Activated CD4-positive, alpha-beta memory T cell treated with anti-CD3 and anti-CD28 coated beads for 36 hours (primary cell): ENCODE measurements at regions of chr4 and their contacts with region 1.

Region 1: DNA sequence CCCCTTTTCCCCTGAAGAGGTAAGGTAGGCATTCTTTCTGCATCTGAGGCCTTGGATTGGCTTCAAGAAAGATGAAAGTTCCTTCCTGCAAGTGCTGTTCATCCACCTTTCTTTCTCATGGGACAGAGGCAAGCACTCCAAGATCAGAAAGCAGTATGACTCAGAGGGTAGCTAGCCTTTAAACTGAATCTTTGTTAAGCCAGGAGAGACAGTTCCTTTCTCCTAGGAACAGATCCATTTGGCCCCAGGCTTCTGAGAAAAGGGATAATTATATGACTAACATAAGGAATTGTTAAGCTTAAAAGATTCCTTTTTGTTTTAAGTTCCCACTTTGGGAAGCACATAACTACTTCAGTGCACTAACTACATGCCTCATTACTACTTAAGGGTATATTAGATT is 192.0 kb downstream of the PPP3CA start:
- DNase-seq: no peak
- H3K4me3 Mint-ChIP-seq: no peak overlapping the region
- H3K27ac Mint-ChIP-seq: no peak overlapping the region
- H3K4me1 Mint-ChIP-seq: peaks cover 45% of the 10 kb centered on the region
- H3K27me3 Mint-ChIP-seq: no peaks in the 10 kb centered on the region

Region 2: GRCh38 chr4:101037938-101038413 is 117.4 kb before region 1 on chr4:
- CTCF ChIA-PET with region 1: no interaction called
- POLR2A ChIA-PET with region 1: no interaction called
- intact Hi-C with region 1: loop called (anchors 1 kb)
- DNase-seq: peak; percentile 44
- H3K4me3 Mint-ChIP-seq: no peak overlapping the region
- H3K27ac Mint-ChIP-seq: peak overlapping the region; percentile 52
- H3K4me1 Mint-ChIP-seq: peaks cover 27% of the 10 kb centered on the region
- H3K27me3 Mint-ChIP-seq: no peaks in the 10 kb centered on the region

Region 3: DNA sequence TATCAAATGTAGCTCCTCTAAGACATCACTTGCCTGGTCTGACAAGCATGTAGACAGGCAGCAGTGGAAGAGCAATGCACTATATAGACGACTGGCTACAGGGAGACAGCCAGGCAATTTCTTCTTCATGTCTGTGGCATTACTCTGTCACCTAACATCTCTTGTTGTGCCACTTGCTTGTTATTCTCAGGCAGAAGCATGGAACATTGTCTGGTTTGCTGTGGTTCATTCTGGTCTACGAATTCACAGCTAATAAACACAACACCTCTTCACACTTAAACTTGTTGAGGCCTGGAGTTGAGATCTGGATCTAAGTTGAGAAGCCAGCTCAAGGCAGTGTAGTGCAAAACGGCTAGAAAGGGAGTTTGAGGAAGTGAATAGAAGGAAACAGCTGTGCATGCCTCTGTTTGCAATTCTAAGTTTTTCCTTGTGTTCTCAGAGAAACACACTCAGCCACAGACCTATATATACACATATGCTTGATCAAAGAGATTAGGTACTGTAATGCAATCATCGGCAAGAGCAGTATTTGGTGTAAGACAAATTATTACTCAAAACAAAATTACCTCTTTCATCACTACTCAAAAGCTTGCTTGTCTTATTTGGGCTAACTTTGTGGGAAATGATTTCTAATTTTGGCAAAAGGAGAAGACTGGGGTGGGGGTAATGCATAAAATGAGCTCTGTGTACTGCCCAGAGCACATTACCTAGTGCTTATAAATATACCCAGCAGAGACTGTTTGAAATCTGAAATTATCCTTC is 51.8 kb before region 1 on chr4:
- CTCF ChIA-PET with region 1: no interaction called
- POLR2A ChIA-PET with region 1: interaction called, 3 read pairs
- intact Hi-C with region 1: loop called (anchors 1 kb)
- DNase-seq: no peak
- H3K4me3 Mint-ChIP-seq: no peak overlapping the region
- H3K27ac Mint-ChIP-seq: peak overlapping the region; percentile 42
- H3K4me1 Mint-ChIP-seq: peaks cover 19% of the 10 kb centered on the region
- H3K27me3 Mint-ChIP-seq: no peaks in the 10 kb centered on the region

Region 4: GRCh38 chr4:101127176-101127790 is 28.1 kb before region 1 on chr4:
- CTCF ChIA-PET with region 1: no interaction called
- POLR2A ChIA-PET with region 1: no interaction called
- intact Hi-C with region 1: no loop called
- DNase-seq: no peak
- H3K4me3 Mint-ChIP-seq: no peak overlapping the region
- H3K27ac Mint-ChIP-seq: no peak overlapping the region
- H3K4me1 Mint-ChIP-seq: peaks cover 27% of the 10 kb centered on the region
- H3K27me3 Mint-ChIP-seq: no peaks in the 10 kb centered on the region

Region 5: GRCh38 chr4:101175896-101176676 is 20.7 kb after region 1 on chr4:
- CTCF ChIA-PET with region 1: no interaction called
- POLR2A ChIA-PET with region 1: no interaction called
- intact Hi-C with region 1: loop called (anchors 1 kb)
- DNase-seq: no peak
- H3K4me3 Mint-ChIP-seq: no peak overlapping the region
- H3K27ac Mint-ChIP-seq: no peak overlapping the region
- H3K4me1 Mint-ChIP-seq: peaks cover 38% of the 10 kb centered on the region
- H3K27me3 Mint-ChIP-seq: no peaks in the 10 kb centered on the region

Region 6: DNA sequence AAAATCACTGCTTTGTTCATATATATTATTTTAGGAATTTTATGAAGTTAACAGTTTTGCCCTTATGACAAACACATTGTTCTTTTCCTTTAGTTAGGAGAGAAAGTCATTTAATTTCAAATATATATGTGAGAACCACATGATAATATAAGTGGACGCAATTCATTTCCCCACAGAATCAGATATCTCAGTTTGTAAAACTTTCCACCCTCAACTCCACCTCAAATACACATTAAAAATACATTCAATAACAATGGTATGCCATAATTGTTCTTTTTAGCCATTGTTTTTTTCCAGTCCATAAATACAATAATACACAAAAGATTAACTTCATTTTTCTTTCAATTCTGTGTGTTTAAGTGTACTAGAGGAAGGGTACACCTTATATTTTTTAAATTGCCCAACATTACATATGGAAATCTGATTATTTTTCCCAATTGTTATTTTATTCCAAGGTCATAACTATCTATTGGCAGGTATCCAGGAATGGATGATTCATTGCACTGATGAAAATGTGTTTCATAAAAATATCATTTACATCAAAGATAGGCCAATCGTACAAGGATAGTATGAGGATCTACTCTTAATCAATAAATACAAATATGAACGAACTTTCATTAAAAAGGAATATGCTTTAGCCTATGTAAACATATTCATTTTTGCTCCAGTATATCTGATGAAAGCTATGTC is 66.9 kb after region 1 on chr4:
- CTCF ChIA-PET with region 1: no interaction called
- POLR2A ChIA-PET with region 1: no interaction called
- intact Hi-C with region 1: no loop called
- DNase-seq: no peak
- H3K4me3 Mint-ChIP-seq: no peak overlapping the region
- H3K27ac Mint-ChIP-seq: no peak overlapping the region
- H3K4me1 Mint-ChIP-seq: peaks cover 24% of the 10 kb centered on the region
- H3K27me3 Mint-ChIP-seq: no peaks in the 10 kb centered on the region

Region 7: DNA sequence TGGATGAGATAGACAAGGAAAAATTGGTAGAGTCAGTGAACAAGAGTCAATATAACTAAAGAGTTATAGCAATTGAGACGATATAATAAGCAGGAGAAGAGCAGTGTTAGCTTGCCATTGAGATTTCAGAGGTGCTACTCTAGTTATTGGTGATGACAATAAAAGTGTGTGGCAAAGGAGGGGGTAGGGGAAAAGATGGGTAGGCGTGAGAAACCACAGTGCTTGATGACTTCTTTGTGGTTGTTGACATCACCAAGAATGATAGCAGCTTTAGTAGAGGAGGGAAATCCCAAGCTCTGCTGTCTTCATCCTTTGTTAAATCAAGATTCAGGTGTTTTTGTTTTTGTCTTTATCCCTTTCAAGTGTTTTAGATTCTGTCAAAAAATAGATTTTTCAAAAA is 371.8 kb after region 1 on chr4:
- CTCF ChIA-PET with region 1: no interaction called
- POLR2A ChIA-PET with region 1: no interaction called
- intact Hi-C with region 1: loop called (anchors 1 kb)
- DNase-seq: peak; percentile 87
- H3K4me3 Mint-ChIP-seq: peak overlapping the region; percentile 12
- H3K27ac Mint-ChIP-seq: peak overlapping the region; percentile 30
- H3K4me1 Mint-ChIP-seq: peaks cover 20% of the 10 kb centered on the region
- H3K27me3 Mint-ChIP-seq: peaks cover 38% of the 10 kb centered on the region

Region 8: GRCh38 chr4:102007959-102008425 is 852.6 kb after region 1 on chr4:
- CTCF ChIA-PET with region 1: no interaction called
- POLR2A ChIA-PET with region 1: no interaction called
- intact Hi-C with region 1: loop called (anchors 5 kb)
- DNase-seq: no peak
- H3K4me3 Mint-ChIP-seq: no peak overlapping the region
- H3K27ac Mint-ChIP-seq: no peak overlapping the region
- H3K4me1 Mint-ChIP-seq: peaks cover 10% of the 10 kb centered on the region
- H3K27me3 Mint-ChIP-seq: no peaks in the 10 kb centered on the region